ENCODE measurements at regions of chr13 and their contacts with region 1.

Region 1: DNA sequence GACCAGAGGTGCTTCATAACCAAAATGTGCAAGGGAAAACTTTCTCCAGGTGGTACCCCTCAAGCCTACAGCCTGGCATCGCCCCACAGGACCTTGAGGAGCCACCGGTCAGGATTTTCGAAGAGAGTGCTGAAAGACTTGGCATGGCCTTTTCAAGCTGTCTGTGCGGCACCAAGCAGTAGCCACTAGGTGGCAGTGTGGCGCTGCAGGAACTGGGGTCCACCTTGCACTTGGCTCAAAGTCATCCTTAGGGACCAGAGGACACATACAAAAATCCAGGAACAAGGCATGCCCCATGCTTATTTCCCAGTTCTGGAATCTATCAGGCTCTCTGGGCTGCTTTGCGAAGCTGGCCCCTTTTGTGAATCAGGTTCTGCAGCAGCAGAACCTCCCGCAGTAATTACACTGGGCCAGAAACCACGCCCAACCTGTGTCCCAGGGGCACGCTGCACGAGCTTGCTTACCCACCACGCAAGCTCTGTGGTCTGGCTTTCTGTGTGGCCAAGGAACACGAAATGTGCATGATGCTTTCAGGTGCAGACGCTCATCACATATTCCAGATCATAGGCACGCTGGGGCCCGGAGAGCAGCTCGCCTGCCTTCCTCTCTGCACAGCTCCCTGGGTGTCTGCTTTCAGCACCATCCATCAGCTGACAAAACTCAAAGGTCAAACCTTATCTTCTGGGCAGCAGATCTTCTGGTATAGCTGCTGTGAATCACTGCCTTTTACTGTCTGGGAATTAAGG is 87.2 kb downstream of the SLC7A1 start:
- DNase-seq: peak; percentile 70 to 91
- H3K4me3 ChIP-seq: no peak overlapping the region
- H3K27ac ChIP-seq: no peak overlapping the region
- H3K4me1 ChIP-seq: no peaks in the 10 kb centered on the region
- H3K27me3 ChIP-seq: no peaks in the 10 kb centered on the region
- CTCF ChIP-seq: peak in 2 of 3 experiments; percentile 81 to 98; a peak in 3 of 4 replicates
- EP300 ChIP-seq: no peak
- POLR2A ChIP-seq: 0 out of 3 replicates have a peak, but pooled peaks of 1 of the 2 experiments have one; percentile 32
- RAD21 ChIP-seq: peak; percentile 92 to 93

Region 2: GRCh38 chr13:29059800-29060199 is 448.5 kb before region 1 on chr13:
- CTCF ChIA-PET with region 1: no interaction called
- POLR2A ChIA-PET with region 1: no interaction called
- DNase-seq: no peak
- H3K4me3 ChIP-seq: no peak overlapping the region
- H3K27ac ChIP-seq: no peak overlapping the region
- H3K4me1 ChIP-seq: no peaks in the 10 kb centered on the region
- H3K27me3 ChIP-seq: peaks cover 0 to 1% (median 0%) of the 10 kb centered on the region in 4 experiments; a peak in 1 of 7 replicates
- CTCF ChIP-seq: no peak
- EP300 ChIP-seq: no peak
- POLR2A ChIP-seq: no peak
- RAD21 ChIP-seq: no peak

Region 3: GRCh38 chr13:29484236-29484635 is 24.1 kb before region 1 on chr13:
- CTCF ChIA-PET with region 1: interaction called, 15 read pairs
- POLR2A ChIA-PET with region 1: interaction called, 3 read pairs
- DNase-seq: no peak
- H3K4me3 ChIP-seq: no peak overlapping the region
- H3K27ac ChIP-seq: no peak overlapping the region
- H3K4me1 ChIP-seq: peaks cover 2 to 11% (median 6%) of the 10 kb centered on the region in 4 experiments
- H3K27me3 ChIP-seq: no peaks in the 10 kb centered on the region
- CTCF ChIP-seq: no peak
- EP300 ChIP-seq: no peak
- POLR2A ChIP-seq: no peak
- RAD21 ChIP-seq: no peak

Region 4: GRCh38 chr13:29529754-29530153 is 21.5 kb after region 1 on chr13:
- CTCF ChIA-PET with region 1: interaction called, 13 read pairs
- POLR2A ChIA-PET with region 1: interaction called, 5 read pairs
- DNase-seq: no peak
- H3K4me3 ChIP-seq: no peak overlapping the region
- H3K27ac ChIP-seq: no peak overlapping the region
- H3K4me1 ChIP-seq: no peaks in the 10 kb centered on the region
- H3K27me3 ChIP-seq: no peaks in the 10 kb centered on the region
- CTCF ChIP-seq: no peak
- EP300 ChIP-seq: no peak
- POLR2A ChIP-seq: no peak
- RAD21 ChIP-seq: no peak

Region 5: GRCh38 chr13:29583073-29583785 is 74.9 kb after region 1 on chr13:
- CTCF ChIA-PET with region 1: interaction called, 11 read pairs
- POLR2A ChIA-PET with region 1: interaction called, 4 read pairs
- DNase-seq: no peak
- H3K4me3 ChIP-seq: no peak overlapping the region
- H3K27ac ChIP-seq: no peak overlapping the region
- H3K4me1 ChIP-seq: peaks cover 18 to 31% (median 25%) of the 10 kb centered on the region in 4 experiments
- H3K27me3 ChIP-seq: no peaks in the 10 kb centered on the region
- CTCF ChIP-seq: no peak
- EP300 ChIP-seq: no peak
- POLR2A ChIP-seq: no peak
- RAD21 ChIP-seq: no peak

Region 6: DNA sequence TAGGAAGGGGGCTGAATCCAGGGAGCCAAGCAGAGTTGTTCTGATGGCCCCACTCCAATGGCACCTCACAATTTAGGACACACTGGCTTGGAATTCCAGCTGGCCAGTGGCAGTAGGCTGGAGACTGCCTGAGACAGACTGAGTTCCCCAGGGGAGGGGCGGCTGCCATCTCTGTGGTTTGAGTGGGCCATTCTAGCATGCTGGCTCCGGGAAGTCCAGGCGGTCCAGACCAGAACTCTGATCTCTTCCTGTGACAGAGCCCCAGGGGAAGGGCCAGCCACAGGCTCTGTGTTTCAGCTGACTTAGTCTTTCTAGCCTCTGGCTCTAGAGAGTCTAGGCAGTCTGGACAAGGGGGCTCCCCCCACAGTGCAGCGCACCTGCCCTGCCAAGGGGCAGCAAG is 116.7 kb after region 1 on chr13:
- CTCF ChIA-PET with region 1: no interaction called
- POLR2A ChIA-PET with region 1: no interaction called
- DNase-seq: no peak
- H3K4me3 ChIP-seq: no peak overlapping the region
- H3K27ac ChIP-seq: no peak overlapping the region
- H3K4me1 ChIP-seq: no peaks in the 10 kb centered on the region
- H3K27me3 ChIP-seq: no peaks in the 10 kb centered on the region
- CTCF ChIP-seq: no peak
- EP300 ChIP-seq: no peak
- POLR2A ChIP-seq: no peak
- RAD21 ChIP-seq: no peak

Region 7: DNA sequence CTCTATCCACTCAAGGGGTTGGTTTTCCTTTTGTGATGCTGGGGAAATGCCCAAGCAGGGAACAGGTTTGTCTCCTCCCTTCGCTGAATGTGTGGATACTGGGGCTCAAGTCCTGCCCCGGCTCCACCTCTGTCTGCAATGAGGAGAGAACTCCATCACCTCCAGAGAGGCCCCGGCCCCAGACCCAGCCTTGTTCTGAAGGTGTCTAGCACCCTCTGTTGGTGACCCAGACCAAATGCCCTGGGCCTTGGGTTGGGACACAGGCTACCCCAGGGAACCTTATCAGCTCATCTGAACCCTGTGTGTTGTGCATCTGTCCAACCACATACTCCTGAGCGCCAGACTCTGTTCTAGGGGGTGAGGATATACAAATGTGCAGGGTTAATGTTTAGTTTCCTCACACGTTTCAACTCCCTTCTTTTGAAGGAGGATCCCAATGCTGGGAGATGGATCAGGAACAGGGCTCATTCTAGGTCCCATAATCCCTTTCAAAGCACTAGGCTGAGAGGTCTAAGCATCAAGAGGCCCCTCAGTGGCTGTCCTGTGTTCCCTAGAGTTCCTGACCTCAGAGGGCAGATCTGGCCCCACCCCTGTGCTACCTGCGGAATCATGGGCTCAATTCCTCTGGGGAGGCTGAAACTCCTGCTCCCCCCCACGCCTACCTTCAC is 199.7 kb after region 1 on chr13:
- CTCF ChIA-PET with region 1: interaction called, 210 read pairs
- POLR2A ChIA-PET with region 1: interaction called, 6 read pairs
- DNase-seq: peak; percentile 59 to 79
- H3K4me3 ChIP-seq: no peak overlapping the region
- H3K27ac ChIP-seq: no peak overlapping the region
- H3K4me1 ChIP-seq: peaks cover 0 to 4% (median 3%) of the 10 kb centered on the region in 4 experiments; a peak in 6 of 7 replicates
- H3K27me3 ChIP-seq: no peaks in the 10 kb centered on the region
- CTCF ChIP-seq: peak; percentile 85 to 94 (median 92)
- EP300 ChIP-seq: no peak
- POLR2A ChIP-seq: no peak
- RAD21 ChIP-seq: peak; percentile 98 to 100